ENCODE measurements at regions of chr11 and their contacts with region 1.

Region 1: DNA sequence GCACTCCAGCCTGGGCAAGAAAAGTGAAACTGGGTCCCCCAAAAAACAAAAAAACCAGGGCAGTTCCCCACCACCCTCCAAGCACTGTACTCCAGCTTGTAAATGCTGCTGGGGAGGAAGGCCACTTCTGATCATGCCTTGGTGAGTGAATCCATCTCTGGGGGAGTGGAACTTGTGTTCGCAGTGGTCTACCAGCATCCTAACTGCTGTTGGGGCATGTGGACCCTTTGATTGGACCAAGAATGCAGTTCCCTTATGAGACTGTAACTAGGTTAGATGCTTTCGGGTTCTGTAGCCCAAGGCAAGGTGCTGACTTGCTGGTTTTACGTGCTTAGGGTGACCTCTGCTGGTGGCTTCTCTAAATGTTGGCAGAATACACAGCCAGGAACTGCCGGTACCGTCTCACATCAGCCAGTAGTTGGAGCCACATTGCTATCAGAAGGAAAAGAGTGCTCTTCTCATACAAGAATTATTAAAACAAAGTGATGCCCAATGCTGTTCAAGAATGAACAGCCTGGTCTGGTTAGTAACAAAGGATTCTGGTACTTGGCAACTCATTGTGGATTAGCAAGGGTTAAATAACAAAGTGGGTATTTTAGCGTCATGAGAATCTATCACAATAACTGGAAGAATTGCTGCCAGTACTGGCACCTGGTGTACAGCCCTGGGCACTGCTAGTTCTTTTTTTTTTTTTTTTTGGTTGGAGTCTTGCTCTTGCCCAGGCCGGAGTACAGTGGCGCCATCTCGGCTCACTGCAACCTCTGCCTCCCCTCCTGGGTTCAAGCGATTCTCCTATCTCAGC is 13.0 kb downstream of the EIF1AD start:
- DNase-seq: peak; percentile 98
- H3K4me3 Mint-ChIP-seq: no peak overlapping the region
- H3K27ac Mint-ChIP-seq: peak overlapping the region; percentile 70
- H3K4me1 Mint-ChIP-seq: peaks cover 4% of the 10 kb centered on the region
- H3K27me3 Mint-ChIP-seq: no peaks in the 10 kb centered on the region

Region 2: DNA sequence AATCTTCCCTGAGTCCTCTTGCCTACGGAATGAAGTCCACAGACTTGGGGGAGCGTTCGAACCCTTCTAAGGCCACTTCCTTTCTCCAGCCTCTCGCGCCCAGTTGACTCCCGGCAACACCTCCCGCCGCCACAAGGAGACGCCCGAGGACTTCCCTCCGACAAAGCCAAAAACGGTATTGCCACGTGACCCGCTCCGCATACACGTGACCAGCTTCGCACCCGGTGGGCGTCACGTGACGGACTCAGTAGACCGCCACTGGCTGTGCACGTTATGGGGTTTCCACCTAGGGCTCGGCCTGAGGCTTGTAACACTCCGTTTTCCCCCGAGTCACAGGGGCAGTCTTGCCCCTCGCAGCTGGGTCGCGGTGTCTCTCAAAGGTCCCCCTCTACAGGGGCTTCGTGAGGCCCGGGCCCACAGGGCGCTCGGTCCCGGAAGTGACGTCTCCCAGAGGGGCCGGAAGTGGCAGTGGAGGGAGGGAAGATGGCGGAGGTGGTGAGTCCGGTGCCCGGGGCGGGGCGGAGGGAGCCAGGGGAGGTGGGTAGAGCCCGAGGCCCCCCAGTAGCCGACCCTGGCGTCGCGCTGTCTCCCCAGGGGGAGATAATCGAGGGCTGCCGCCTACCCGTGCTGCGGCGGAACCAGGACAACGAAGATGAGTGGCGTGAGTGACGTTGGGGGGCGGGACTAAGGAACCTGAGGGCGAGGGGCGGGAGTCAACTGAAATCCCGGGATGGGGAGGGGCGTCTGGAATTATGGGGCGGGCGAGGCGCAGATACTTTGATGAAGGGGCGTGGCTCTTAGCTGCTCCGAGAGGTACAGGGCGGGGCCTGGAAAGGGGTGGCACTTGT is 277.0 kb before region 1 on chr11 and contains the start of gene KAT5:
- CTCF ChIA-PET with region 1: interaction called, 4 read pairs
- intact Hi-C with region 1: loop called (anchors 1 kb)
- DNase-seq: peak; percentile 100
- H3K4me3 Mint-ChIP-seq: peak within 1 kb of the TSS; percentile 95
- H3K27ac Mint-ChIP-seq: peak within 1 kb of the TSS; percentile 97
- H3K4me1 Mint-ChIP-seq: peaks cover 33% of the 10 kb centered on the region
- H3K27me3 Mint-ChIP-seq: no peaks in the 10 kb centered on the region
- total RNA-seq, gene KAT5: 60.1 to 67.1 TPM

Region 3: GRCh38 chr11:65817835-65818742 is 170.9 kb before region 1 on chr11:
- CTCF ChIA-PET with region 1: interaction called, 5 read pairs
- intact Hi-C with region 1: loop called (anchors 1 kb)
- DNase-seq: peak; percentile 96
- H3K4me3 Mint-ChIP-seq: peak overlapping the region; percentile 72
- H3K27ac Mint-ChIP-seq: peak overlapping the region; percentile 50
- H3K4me1 Mint-ChIP-seq: peaks cover 6% of the 10 kb centered on the region
- H3K27me3 Mint-ChIP-seq: no peaks in the 10 kb centered on the region

Region 4: GRCh38 chr11:65900125-65900898 is 88.7 kb before region 1 on chr11 and contains the start of gene FOSL1:
- CTCF ChIA-PET with region 1: interaction called, 4 read pairs
- intact Hi-C with region 1: loop called (anchors 1 kb)
- DNase-seq: peak; percentile 96
- H3K4me3 Mint-ChIP-seq: peak within 1 kb of the TSS; percentile 83
- H3K27ac Mint-ChIP-seq: peak within 1 kb of the TSS; percentile 79
- H3K4me1 Mint-ChIP-seq: peaks cover 33% of the 10 kb centered on the region
- H3K27me3 Mint-ChIP-seq: peaks cover 2% of the 10 kb centered on the region
- total RNA-seq, gene FOSL1: 8.2 TPM

Region 5: DNA sequence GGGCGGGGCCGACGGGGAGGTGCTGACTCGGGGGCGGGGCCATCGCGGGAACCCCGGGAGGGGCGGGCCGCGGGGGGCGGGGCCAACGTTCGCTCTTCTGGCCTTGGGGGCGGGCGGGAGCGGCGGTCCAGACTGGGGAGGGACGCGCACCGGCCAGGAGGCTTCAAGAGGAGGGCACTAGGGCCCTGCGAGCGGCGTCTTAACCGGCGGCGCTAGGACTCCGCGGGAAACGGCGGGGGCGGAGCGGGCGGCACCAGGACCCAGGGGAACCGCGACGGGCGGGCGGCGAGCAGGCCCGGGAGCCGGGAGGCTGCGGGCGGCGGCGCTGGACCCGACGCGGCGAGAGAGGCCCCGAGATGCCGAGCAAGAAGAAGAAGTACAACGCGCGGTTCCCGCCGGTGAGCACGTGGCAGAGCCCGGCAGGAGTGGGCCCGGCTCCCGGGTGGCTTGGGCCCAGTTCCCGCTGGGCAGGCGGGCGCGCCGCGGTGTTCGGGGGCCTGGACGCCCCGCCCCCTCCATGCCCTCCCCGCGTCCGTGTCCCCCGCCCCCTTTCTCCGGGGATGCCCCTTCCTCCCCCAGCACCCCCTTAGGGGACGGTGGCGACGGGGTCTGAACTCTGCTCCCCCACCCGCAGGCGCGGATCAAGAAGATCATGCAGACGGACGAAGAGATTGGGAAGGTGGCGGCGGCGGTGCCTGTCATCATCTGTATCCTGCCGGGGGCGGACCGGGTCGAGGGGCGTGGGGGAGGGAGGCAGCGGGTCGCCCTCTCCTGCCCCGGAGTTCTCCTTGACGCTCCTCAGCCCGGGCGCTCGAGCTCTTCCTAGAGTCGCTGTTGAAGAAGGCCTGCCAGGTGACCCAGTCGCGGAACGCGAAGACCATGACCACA is 69.6 kb before region 1 on chr11 and contains the start of gene DRAP1:
- CTCF ChIA-PET with region 1: interaction called, 4 read pairs
- intact Hi-C with region 1: loop called (anchors 1 kb)
- DNase-seq: peak; percentile 99
- H3K4me3 Mint-ChIP-seq: peak within 1 kb of the TSS; percentile 93
- H3K27ac Mint-ChIP-seq: peak within 1 kb of the TSS; percentile 84
- H3K4me1 Mint-ChIP-seq: peaks cover 41% of the 10 kb centered on the region
- H3K27me3 Mint-ChIP-seq: no peaks in the 10 kb centered on the region
- total RNA-seq, gene DRAP1: 117 to 134 TPM

Region 6: DNA sequence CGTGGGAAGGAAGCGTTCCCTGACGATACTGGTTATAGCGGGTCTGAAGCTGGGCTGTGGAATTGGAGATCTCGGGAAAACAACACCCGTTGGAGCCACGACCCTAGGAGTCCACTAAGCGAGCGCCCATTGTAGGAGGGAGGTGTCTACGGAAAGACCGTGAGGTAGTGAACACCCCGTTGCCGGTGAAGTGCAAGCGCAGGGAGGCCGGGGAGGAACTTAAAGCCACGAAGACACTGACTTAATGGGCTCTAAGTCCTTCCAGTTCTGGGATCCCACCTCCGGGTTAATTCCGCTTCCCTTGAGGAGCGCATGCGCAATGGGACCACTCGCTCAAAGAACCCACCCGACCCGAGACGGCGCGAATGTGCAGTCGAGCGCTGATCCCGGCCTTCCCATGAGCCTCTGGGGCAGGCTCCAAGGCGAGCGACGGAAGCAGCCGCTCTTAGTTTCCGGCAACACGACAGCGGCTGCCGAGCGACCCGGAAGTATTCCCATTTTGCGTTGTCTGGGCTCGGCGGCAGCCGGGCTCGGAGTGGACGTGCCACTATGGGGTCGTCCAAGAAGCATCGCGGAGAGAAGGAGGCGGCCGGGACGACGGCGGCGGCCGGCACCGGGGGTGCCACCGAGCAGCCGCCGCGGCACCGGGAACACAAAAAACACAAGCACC is 27.6 kb before region 1 on chr11 and contains the start of gene SART1:
- CTCF ChIA-PET with region 1: interaction called, 4 read pairs
- intact Hi-C with region 1: loop called (anchors 2 kb)
- DNase-seq: peak; percentile 98
- H3K4me3 Mint-ChIP-seq: peak within 1 kb of the TSS; percentile 95
- H3K27ac Mint-ChIP-seq: peak within 1 kb of the TSS; percentile 95
- H3K4me1 Mint-ChIP-seq: peaks cover 48% of the 10 kb centered on the region
- H3K27me3 Mint-ChIP-seq: no peaks in the 10 kb centered on the region
- total RNA-seq, gene SART1: 50.1 to 59.9 TPM

Region 7: GRCh38 chr11:66022401-66023185 is 33.6 kb after region 1 on chr11:
- CTCF ChIA-PET with region 1: interaction called, 3 read pairs
- intact Hi-C with region 1: loop called (anchors 1 kb)
- DNase-seq: peak; percentile 81
- H3K4me3 Mint-ChIP-seq: peak overlapping the region; percentile 42
- H3K27ac Mint-ChIP-seq: no peak overlapping the region
- H3K4me1 Mint-ChIP-seq: peaks cover 5% of the 10 kb centered on the region
- H3K27me3 Mint-ChIP-seq: peaks cover 5% of the 10 kb centered on the region

Measured in activated naive CD4-positive, alpha-beta T cell treated with anti-CD3 and anti-CD28 coated beads for 36 hours (primary cell).